Activated CD8-positive, alpha-beta T cell treated with anti-CD3 and anti-CD28 coated beads, Interleukin-2, amount 10 ng/mL, durations not matched to agents 7 days and 5 days (primary cell): ENCODE measurements at regions of chr17 and their contacts with region 1.

Region 1: DNA sequence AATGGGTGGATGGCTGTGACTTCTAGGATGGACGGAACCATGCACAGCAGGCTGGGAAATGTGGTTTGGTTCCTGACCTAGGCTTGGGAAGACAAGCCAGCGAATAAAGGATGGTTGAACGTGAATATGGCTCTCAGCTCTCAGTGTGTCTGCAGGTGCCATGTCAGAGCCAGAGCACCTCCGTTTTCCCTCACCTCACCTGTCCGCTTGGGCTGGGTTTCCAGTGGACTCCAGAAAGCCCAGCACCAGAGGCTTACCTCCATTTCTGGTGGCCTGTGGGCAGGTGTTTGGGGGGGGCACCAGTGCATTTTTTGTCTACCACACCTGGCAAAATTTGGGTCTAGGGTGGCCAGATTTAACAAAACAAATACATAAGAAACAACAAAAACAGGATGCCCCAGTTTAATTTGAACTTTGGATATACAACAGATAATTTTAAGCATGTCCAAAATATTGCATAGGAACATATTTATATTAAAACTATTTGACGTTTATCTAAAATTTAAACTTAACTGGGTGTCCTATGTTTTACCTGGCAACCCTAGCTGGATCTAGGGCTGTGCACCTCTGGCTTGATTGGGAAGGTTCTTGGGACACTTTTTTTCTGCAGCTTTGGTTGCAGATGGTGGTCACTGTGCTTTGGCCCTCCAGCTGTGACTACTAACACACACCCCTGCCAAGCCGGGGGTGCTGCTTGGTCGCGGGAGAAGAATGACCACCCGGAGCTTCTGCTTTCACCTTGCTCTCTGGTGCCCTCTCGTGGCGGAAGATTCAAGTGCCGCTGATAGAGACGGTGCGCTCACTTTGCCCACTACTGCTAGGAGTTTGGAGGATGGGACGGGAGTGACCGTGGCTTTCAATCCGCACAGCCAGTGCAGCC is 6.3 kb downstream of the SPACA3 start:
- DNase-seq: peak; percentile 81
- ATAC-seq: peak; percentile 81
- H3K4me3 Mint-ChIP-seq: no peak overlapping the region
- H3K27ac Mint-ChIP-seq: no peak overlapping the region
- H3K4me1 Mint-ChIP-seq: peaks cover 4% of the 10 kb centered on the region
- H3K27me3 Mint-ChIP-seq: peaks cover 17% of the 10 kb centered on the region

Region 2: GRCh38 chr17:32936894-32937500 is 61.0 kb before region 1 on chr17:
- CTCF ChIA-PET with region 1: interaction called, 13 read pairs
- POLR2A ChIA-PET with region 1: no interaction called
- DNase-seq: peak; percentile 70
- ATAC-seq: peak; percentile 80
- H3K4me3 Mint-ChIP-seq: no peak overlapping the region
- H3K27ac Mint-ChIP-seq: no peak overlapping the region
- H3K4me1 Mint-ChIP-seq: peaks cover 3% of the 10 kb centered on the region
- H3K27me3 Mint-ChIP-seq: peaks cover 12% of the 10 kb centered on the region

Region 3: DNA sequence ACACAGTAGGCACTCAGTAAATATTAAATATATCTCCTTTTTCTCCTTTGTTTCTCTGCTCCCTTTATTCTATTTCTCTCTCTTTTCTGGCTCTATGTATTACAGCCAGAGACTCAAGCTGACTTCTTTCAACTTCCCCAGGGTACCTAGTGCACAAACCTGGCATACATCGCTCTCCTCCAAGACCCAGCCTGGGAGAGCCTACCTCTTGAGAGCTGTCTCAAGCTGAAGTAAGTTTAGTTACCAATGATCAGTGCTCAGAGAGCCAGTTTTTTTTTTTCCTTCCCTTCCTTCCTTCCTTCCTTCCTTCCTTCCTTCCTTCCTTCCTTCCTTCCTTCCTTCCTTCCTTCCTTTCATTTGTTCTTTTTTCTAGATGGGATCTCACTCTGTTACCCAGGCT is 50.3 kb before region 1 on chr17:
- CTCF ChIA-PET with region 1: no interaction called
- POLR2A ChIA-PET with region 1: no interaction called
- DNase-seq: no peak
- ATAC-seq: no peak
- H3K4me3 Mint-ChIP-seq: no peak overlapping the region
- H3K27ac Mint-ChIP-seq: no peak overlapping the region
- H3K4me1 Mint-ChIP-seq: no peaks in the 10 kb centered on the region
- H3K27me3 Mint-ChIP-seq: peaks cover 22% of the 10 kb centered on the region

Region 4: GRCh38 chr17:32976131-32976530 is 21.9 kb before region 1 on chr17:
- CTCF ChIA-PET with region 1: interaction called, 12 read pairs
- POLR2A ChIA-PET with region 1: no interaction called
- DNase-seq: no peak
- ATAC-seq: no peak
- H3K4me3 Mint-ChIP-seq: no peak overlapping the region
- H3K27ac Mint-ChIP-seq: no peak overlapping the region
- H3K4me1 Mint-ChIP-seq: peaks cover 3% of the 10 kb centered on the region
- H3K27me3 Mint-ChIP-seq: peaks cover 5% of the 10 kb centered on the region

Region 5: GRCh38 chr17:33009636-33010035 is 11.6 kb after region 1 on chr17:
- CTCF ChIA-PET with region 1: interaction called, 21 read pairs
- POLR2A ChIA-PET with region 1: no interaction called
- DNase-seq: no peak
- ATAC-seq: no peak
- H3K4me3 Mint-ChIP-seq: no peak overlapping the region
- H3K27ac Mint-ChIP-seq: no peak overlapping the region
- H3K4me1 Mint-ChIP-seq: no peaks in the 10 kb centered on the region
- H3K27me3 Mint-ChIP-seq: no peaks in the 10 kb centered on the region